ENCODE measurements at regions of chr2 and their contacts with region 1.

Region 1: DNA sequence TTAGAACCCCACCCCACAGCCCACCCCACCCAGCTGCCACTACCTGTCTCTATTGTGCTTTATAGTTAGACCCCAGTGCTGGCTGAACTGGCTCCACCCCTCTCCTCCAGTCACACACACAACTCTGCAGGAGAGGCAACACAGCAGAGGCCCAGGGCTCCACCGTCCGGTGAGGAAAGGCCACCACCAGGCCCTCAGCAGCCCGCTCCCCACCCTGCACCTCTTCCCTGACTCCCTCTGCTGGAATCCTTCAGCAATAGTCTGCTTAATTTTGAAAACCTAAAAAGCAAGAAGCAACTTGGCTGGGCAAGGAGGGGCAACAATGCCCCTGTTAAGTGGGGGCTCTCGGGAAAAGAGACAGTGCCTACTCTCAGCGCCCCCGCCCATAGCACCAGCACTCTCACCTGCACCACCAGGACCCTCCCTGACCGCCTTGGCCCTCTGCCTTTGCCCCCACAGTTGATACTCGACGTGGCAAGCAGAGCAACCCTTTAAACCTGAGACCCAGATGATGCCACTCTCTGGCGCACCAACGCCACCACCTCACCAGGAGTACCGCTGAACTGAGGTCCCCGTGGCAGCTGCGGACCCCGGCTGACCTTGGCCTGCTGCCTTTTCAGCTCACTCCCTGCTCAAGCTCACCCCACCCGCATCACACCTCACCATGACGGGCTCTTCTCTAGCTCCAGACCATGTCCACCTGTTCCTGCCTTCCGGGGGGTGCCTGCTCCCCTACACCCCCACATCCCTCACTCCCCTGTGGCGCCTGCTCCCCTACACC is 45.7 kb downstream of the NDUFA10 start:
- DNase-seq: peak in 5 of 10 donors; percentile 54 to 74 (median 67)
- H3K4me3 ChIP-seq: no peak overlapping the region
- H3K27ac ChIP-seq: peak overlapping the region in 8 of 59 donors; percentile 1 to 51 (median 29)
- H3K27me3 ChIP-seq: no peaks in the 10 kb centered on the region
- CTCF ChIP-seq: peak in 49 of 56 donors; percentile 8 to 74 (median 51)

Region 2: GRCh38 chr2:239369631-239370161 is 609.7 kb before region 1 on chr2:
- intact Hi-C with region 1: loop called in 1 of 2 experiments (anchors 10 kb)
- DNase-seq: peak in 5 of 10 donors; percentile 20 to 69 (median 58)
- H3K4me3 ChIP-seq: peak overlapping the region in 2 of 59 donors; percentile 5 to 7
- H3K27ac ChIP-seq: peak overlapping the region in 30 of 59 donors; percentile 3 to 64 (median 38)
- H3K27me3 ChIP-seq: no peaks in the 10 kb centered on the region
- CTCF ChIP-seq: no peak

Region 3: GRCh38 chr2:240013343-240013742 is 33.9 kb after region 1 on chr2:
- intact Hi-C with region 1: no loop called
- DNase-seq: no peak
- H3K4me3 ChIP-seq: no peak overlapping the region
- H3K27ac ChIP-seq: no peak overlapping the region
- H3K27me3 ChIP-seq: no peaks in the 10 kb centered on the region
- CTCF ChIP-seq: peak in 21 of 56 donors; percentile 5 to 38 (median 21)

Region 4: GRCh38 chr2:240189686-240190085 is 210.3 kb after region 1 on chr2:
- intact Hi-C with region 1: no loop called
- DNase-seq: peak in 3 of 10 donors; percentile 23 to 34 (median 25)
- H3K4me3 ChIP-seq: no peak overlapping the region
- H3K27ac ChIP-seq: no peak overlapping the region
- H3K27me3 ChIP-seq: no peaks in the 10 kb centered on the region
- CTCF ChIP-seq: no peak

Region 5: DNA sequence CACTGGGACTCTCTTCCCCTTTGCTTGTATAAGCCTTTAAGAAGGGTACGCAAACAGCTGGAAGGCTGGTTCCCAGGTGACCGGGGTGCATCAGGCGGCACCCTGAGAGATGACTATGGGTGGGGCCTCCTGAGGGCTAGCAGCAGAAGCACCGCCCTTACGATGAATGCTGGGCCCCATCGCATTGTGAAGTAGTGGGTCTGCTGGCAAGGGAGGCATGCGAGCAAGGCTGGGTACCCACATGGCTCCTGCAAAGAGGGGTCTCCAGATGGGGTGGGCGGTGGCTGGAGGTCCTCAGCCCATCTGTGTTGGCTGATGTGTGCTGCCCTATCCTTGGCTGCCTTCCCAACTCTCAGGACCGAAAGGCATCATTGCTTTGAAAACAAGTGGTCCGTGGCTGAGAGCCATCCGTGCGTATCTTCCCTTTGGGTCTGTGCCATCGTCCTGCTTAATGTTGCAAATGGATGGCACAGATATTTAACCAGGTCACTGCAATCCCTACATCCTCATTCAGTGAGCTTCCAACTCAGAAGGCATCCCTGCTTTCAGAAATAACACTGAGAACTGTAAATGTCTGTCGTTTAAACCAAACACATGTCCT is 372.5 kb after region 1 on chr2:
- intact Hi-C with region 1: no loop called
- DNase-seq: peak in 5 of 10 donors; percentile 19 to 62 (median 32)
- H3K4me3 ChIP-seq: no peak overlapping the region
- H3K27ac ChIP-seq: no peak overlapping the region
- H3K27me3 ChIP-seq: peaks cover 0 to 3% (median 0%) of the 10 kb centered on the region in 45 donors
- CTCF ChIP-seq: no peak